ENCODE measurements at regions of chr3 and their contacts with region 1.

Region 1: DNA sequence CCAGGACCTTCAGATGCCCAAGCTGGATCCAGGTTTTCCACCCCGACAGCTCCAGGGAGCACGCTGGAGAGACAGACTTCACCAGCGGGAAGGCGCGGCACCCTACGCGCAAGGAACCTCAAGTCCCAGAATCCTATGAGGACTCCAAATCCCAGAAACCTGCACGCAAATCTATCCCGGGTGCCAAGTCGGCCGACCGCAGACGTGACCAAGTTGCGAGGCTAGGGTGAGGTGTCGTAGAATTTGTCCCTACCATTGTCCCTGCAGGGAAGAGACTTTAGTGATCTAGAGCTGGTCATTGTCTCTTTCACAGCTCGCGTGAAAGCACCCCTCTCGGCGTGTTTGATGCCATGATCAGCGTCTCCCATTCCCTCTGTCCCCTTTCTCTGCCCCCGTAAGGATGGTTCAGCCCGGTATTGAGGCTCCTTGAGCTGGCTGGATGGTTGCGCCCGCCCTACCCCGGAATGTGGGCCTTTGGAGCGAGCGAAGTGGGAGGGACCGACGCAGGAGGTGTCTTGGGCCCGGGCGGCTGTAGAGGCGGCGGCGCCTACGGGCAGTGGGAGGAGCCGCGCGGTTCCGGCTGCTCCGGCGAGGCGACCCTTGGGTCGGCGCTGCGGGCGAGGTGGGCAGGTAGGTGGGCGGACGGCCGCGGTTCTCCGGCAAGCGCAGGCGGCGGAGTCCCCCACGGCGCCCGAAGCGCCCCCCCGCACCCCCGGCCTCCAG is at the start of gene PRKCI:
- DNase-seq: peak; percentile 94 to 95 (median 95)
- H3K4me3 ChIP-seq: peak within 1 kb of the TSS; percentile 98
- H3K27ac ChIP-seq: peak within 1 kb of the TSS; percentile 89 to 90
- H3K4me1 ChIP-seq: peaks cover 2% of the 10 kb centered on the region
- H3K27me3 ChIP-seq: no peaks in the 10 kb centered on the region
- CTCF ChIP-seq: no peak
- EP300 ChIP-seq: peak; percentile 40
- POLR2A ChIP-seq: peak; percentile 80
- total RNA-seq, gene PRKCI: 33.2 to 62.4 (median 42.3) TPM

Region 2: DNA sequence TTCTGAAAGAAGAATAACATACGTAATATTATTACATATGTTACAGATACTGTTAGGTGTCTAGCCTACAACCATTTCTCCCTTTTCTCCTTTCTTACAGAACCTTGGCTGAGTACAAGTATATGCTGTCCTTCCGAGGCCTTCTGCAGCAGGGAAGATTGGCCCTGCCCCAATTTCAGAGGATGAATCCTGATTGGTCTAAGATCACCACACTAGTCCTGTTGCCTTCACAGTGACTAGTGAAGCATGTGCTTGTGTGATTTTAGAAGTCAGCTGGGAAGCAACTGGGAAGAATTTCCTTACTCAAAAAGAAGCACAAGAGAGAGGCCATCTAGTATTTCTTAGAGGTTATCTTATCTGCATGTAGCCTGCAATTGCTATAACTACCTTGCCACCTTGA is 528.0 kb before region 1 on chr3:
- intact Hi-C with region 1: no loop called
- DNase-seq: no peak
- H3K4me3 ChIP-seq: no peak overlapping the region
- H3K27ac ChIP-seq: no peak overlapping the region
- H3K4me1 ChIP-seq: peaks cover 2% of the 10 kb centered on the region
- H3K27me3 ChIP-seq: no peaks in the 10 kb centered on the region
- CTCF ChIP-seq: no peak
- EP300 ChIP-seq: no peak
- POLR2A ChIP-seq: no peak

Region 3: DNA sequence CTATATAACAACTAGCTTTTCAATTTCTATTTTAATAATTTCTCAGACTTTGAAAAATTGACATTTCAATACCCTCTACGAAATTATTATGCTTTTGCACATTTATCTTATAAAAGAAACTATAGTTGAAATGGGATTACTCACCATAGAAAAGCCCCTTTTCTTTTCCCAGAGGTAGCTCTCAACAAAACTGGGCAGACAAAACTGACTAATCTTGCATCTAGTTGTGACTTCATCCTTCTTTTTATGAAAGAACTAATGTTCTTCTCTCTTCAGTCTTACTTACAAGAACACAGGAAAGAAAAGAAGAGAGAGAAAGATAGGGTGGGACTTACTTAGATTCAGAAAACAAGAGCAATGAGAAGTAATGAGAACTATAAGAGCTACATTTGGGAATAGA is 123.3 kb before region 1 on chr3:
- intact Hi-C with region 1: no loop called
- DNase-seq: no peak
- H3K4me3 ChIP-seq: no peak overlapping the region
- H3K27ac ChIP-seq: no peak overlapping the region
- H3K4me1 ChIP-seq: no peaks in the 10 kb centered on the region
- H3K27me3 ChIP-seq: no peaks in the 10 kb centered on the region
- CTCF ChIP-seq: no peak
- EP300 ChIP-seq: no peak
- POLR2A ChIP-seq: no peak

Region 4: GRCh38 chr3:170189398-170190256 is 32.5 kb before region 1 on chr3:
- intact Hi-C with region 1: loop called in 1 of 4 experiments (anchors 5 kb)
- DNase-seq: no peak
- H3K4me3 ChIP-seq: no peak overlapping the region
- H3K27ac ChIP-seq: no peak overlapping the region
- H3K4me1 ChIP-seq: no peaks in the 10 kb centered on the region
- H3K27me3 ChIP-seq: no peaks in the 10 kb centered on the region
- CTCF ChIP-seq: no peak
- EP300 ChIP-seq: no peak
- POLR2A ChIP-seq: no peak

Region 5: GRCh38 chr3:170247875-170248274 is 25.8 kb after region 1 on chr3:
- intact Hi-C with region 1: no loop called
- DNase-seq: no peak
- H3K4me3 ChIP-seq: no peak overlapping the region
- H3K27ac ChIP-seq: no peak overlapping the region
- H3K4me1 ChIP-seq: peaks cover 3% of the 10 kb centered on the region
- H3K27me3 ChIP-seq: no peaks in the 10 kb centered on the region
- CTCF ChIP-seq: no peak
- EP300 ChIP-seq: no peak
- POLR2A ChIP-seq: no peak

Region 6: DNA sequence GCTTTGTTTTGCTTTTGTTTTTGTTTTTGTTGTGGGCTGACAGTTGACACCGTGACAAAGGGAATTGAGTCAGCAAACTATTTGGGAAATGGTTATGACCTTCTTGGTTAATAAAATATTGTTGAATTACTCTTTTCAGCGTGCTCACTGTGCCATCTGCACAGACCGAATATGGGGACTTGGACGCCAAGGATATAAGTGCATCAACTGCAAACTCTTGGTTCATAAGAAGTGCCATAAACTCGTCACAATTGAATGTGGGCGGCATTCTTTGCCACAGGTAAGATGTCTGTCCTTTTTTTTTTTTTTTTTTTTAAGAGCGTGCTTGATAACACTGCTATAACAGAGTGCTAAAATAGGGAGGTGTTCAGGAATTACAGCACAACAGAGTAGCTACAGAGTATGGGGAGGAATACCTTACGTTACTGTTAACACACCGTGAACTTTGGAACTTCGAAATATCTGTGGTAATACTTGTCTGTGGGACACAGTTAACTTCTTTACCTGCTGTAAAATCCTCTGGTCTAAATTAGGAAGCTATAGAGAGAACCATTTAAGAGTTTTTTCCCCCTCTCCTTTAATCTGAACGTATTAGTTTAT is 48.3 kb after region 1 on chr3:
- intact Hi-C with region 1: no loop called
- DNase-seq: no peak
- H3K4me3 ChIP-seq: no peak overlapping the region
- H3K27ac ChIP-seq: no peak overlapping the region
- H3K4me1 ChIP-seq: no peaks in the 10 kb centered on the region
- H3K27me3 ChIP-seq: no peaks in the 10 kb centered on the region
- CTCF ChIP-seq: no peak
- EP300 ChIP-seq: no peak
- POLR2A ChIP-seq: no peak